Activated CD4-positive, alpha-beta T cell treated with anti-CD3 and anti-CD28 coated beads, Interleukin-2, amount 10 ng/mL, durations not matched to agents 24 days and 14 days (primary cell): ENCODE measurements at regions of chr4 and their contacts with region 1.

Region 1: GRCh38 chr4:103067841-103068547 is 8.6 kb downstream of the SLC9B2 start:
- DNase-seq: no peak
- H3K4me3 Mint-ChIP-seq: no peak overlapping the region
- H3K27ac Mint-ChIP-seq: no peak overlapping the region
- H3K4me1 Mint-ChIP-seq: peaks cover 26% of the 10 kb centered on the region
- H3K27me3 Mint-ChIP-seq: no peaks in the 10 kb centered on the region

Region 2: DNA sequence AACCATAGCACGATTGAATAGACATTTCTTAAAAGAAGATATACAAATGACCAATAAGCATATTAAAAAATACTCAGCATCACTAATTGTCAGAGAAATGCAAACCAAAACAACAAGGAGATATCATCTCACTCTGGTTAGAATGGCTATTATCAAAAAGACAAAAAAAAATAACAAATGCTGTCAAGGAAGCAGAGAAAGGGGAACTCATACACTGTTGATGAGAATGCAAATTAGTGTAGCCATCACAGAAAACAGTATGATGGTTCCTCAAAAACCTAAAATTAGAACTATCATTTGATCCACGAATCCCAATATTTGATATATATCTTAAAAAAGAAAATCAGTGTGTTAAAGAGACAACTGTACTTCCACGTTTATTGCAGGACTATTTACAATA is 1349.2 kb before region 1 on chr4:
- intact Hi-C with region 1: no loop called
- DNase-seq: no peak
- H3K4me3 Mint-ChIP-seq: no peak overlapping the region
- H3K27ac Mint-ChIP-seq: no peak overlapping the region
- H3K4me1 Mint-ChIP-seq: no peaks in the 10 kb centered on the region
- H3K27me3 Mint-ChIP-seq: peaks cover 1% of the 10 kb centered on the region

Region 3: DNA sequence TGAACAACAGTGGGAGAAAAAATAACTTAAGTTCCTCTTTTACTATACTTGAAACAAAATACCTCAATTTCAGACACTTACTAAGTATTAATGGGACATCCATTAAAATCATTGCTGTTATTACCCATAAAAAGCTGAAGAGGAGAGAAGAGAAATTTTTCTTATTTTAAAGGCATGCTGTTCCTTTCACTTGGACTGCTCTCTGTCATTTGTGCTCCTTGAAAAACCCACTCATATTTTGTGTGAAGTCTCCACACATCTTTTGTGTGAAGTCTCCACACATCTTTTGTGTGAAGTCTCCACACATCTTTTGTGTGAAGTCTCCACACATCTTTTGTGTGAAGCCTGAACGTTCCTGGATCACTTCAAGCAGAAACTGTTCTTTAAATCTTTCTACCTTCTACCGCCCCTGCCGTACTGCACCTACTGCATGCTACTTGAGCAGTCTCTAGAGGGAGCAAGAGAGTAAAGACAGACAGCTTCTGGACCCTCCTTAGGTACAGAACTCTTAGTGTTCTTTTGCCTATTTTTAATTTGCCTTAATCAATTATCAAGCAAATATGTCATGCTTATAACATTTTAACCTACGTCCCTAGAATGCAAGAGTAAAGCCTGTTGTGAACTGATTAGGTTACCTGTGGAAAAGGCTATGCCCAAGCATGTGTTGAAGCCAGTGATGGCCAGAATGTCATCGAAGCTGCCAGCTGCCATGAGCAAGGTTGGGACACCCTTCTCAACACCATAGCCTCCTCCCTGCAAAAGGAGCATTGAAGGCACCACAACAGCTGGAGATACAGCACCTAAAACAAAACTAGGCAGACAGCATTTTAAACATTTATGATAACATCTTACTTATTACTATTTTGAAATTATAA is 21.3 kb before region 1 on chr4:
- intact Hi-C with region 1: loop called (anchors 2 kb)
- DNase-seq: peak; percentile 79
- H3K4me3 Mint-ChIP-seq: no peak overlapping the region
- H3K27ac Mint-ChIP-seq: no peak overlapping the region
- H3K4me1 Mint-ChIP-seq: peaks cover 14% of the 10 kb centered on the region
- H3K27me3 Mint-ChIP-seq: no peaks in the 10 kb centered on the region

Region 4: GRCh38 chr4:103079621-103080020 is 11.6 kb after region 1 on chr4:
- intact Hi-C with region 1: no loop called
- DNase-seq: no peak
- H3K4me3 Mint-ChIP-seq: no peak overlapping the region
- H3K27ac Mint-ChIP-seq: no peak overlapping the region
- H3K4me1 Mint-ChIP-seq: peaks cover 23% of the 10 kb centered on the region
- H3K27me3 Mint-ChIP-seq: no peaks in the 10 kb centered on the region

Region 5: GRCh38 chr4:103400405-103400804 is 332.4 kb after region 1 on chr4:
- intact Hi-C with region 1: no loop called
- DNase-seq: no peak
- H3K4me3 Mint-ChIP-seq: no peak overlapping the region
- H3K27ac Mint-ChIP-seq: no peak overlapping the region
- H3K4me1 Mint-ChIP-seq: no peaks in the 10 kb centered on the region
- H3K27me3 Mint-ChIP-seq: no peaks in the 10 kb centered on the region